MCF 10A (cell line): ENCODE measurements at regions of chr22 and their contacts with region 1.

Region 1: GRCh38 chr22:19629720-19630419 is 84.4 kb upstream of the SEPTIN5 start:
- DNase-seq: peak; percentile 83
- H3K4me3 Mint-ChIP-seq: no peak overlapping the region
- H3K27ac Mint-ChIP-seq: no peak overlapping the region
- H3K4me1 Mint-ChIP-seq: peaks cover 6% of the 10 kb centered on the region
- H3K27me3 Mint-ChIP-seq: peaks cover 11% of the 10 kb centered on the region
- CTCF ChIP-seq: peak; percentile 88

Region 2: DNA sequence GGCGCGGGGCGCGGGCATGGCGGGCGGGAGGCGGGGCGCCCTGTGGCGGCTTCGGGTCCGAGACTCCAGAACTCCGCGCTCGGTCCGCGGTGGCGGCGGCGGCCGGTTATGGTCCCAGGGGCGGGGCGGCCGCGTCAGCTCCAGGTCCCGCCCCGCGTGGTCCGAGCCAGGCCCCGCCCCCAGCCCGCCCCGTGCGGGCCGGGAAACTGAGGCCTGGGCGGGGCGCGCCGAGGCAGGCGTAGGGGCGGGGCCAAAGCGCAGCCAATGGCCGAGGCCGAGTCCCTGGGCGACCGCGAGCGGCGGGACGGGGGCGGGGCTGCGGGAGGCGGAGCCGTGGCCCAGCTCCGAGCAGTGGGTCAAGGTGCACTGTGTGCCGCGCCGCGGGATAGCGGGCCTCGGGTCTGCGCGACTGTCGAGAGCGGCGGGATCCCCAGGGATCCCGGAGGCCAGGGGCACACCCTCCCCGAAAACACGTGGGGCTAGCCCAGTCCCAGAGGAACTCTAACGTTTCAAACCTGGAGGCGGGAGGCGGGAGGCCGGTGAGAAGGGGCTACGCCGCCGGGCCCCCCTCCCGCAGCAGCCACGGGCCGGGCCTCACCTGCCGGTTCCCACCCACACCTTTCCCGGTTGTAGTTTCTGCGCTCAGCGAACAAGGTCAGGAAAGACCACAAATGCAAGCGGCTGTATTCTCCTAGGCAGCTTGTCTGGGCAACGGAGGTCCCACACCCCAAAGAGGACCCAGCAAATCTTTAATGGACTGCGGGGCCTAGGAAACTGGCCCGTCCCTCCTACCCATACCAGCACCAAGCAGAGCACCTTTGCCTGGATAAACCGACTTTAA is 451.0 kb before region 1 on chr22 and contains the start of gene SLC25A1:
- CTCF ChIA-PET with region 1: interaction called, 6 read pairs
- POLR2A ChIA-PET with region 1: no interaction called
- intact Hi-C with region 1: loop called (anchors 2 kb)
- DNase-seq: peak; percentile 90
- H3K4me3 Mint-ChIP-seq: peak within 1 kb of the TSS; percentile 75
- H3K27ac Mint-ChIP-seq: peak within 1 kb of the TSS; percentile 31
- H3K4me1 Mint-ChIP-seq: peaks cover 18% of the 10 kb centered on the region
- H3K27me3 Mint-ChIP-seq: no peaks in the 10 kb centered on the region
- CTCF ChIP-seq: no peak
- total RNA-seq, gene SLC25A1: 41.0 and 53.9 TPM in 2 replicates

Region 3: GRCh38 chr22:19479357-19480172 is 150.3 kb before region 1 on chr22 and contains the start of gene CDC45:
- CTCF ChIA-PET with region 1: interaction called, 12 read pairs
- POLR2A ChIA-PET with region 1: interaction called, 9 read pairs
- intact Hi-C with region 1: no loop called
- DNase-seq: peak; percentile 98
- H3K4me3 Mint-ChIP-seq: peak within 1 kb of the TSS; percentile 96
- H3K27ac Mint-ChIP-seq: peak within 1 kb of the TSS; percentile 100
- H3K4me1 Mint-ChIP-seq: peaks cover 38% of the 10 kb centered on the region
- H3K27me3 Mint-ChIP-seq: no peaks in the 10 kb centered on the region
- CTCF ChIP-seq: no peak
- total RNA-seq, gene CDC45: 7.5 and 18.6 TPM in 2 replicates

Region 4: DNA sequence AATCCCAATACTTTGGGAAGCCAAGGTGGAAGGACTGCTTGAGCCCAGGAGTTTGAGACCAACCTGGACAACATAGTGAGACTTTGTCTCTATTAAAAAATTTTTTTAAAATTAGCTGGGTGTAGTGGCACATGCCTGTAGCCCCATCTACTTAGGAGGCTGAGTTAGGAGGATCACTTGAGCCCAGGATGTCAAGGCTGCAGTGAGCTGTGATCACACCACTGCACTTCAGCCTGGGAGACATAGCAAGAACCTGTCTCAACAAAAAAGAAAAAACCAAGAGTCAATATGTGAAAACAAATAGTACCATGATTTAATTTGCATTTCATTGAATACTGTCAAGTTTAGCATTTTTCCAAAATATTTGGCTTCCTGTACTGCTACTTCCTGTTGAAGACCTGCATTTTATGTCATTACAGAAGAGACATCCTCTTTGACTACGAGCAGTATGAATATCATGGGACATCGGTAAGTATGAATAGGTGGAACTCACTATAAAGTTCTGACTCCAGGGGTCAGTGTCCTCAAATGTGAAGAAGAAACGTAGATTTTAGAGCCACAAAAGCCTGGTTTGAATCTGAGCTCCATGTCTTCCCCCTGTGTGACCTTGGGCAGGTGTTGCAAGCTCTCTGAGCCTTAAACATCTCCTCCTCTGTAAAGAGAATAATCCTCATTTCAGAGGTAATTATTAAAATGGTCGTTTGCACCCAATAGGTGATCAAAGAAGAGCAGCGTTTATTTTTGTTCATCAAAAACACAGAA is 134.1 kb before region 1 on chr22:
- CTCF ChIA-PET with region 1: interaction called, 30 read pairs
- POLR2A ChIA-PET with region 1: interaction called, 3 read pairs
- intact Hi-C with region 1: loop called (anchors 1 kb)
- DNase-seq: peak; percentile 32
- H3K4me3 Mint-ChIP-seq: no peak overlapping the region
- H3K27ac Mint-ChIP-seq: no peak overlapping the region
- H3K4me1 Mint-ChIP-seq: peaks cover 6% of the 10 kb centered on the region
- H3K27me3 Mint-ChIP-seq: no peaks in the 10 kb centered on the region
- CTCF ChIP-seq: peak; percentile 15

Region 5: DNA sequence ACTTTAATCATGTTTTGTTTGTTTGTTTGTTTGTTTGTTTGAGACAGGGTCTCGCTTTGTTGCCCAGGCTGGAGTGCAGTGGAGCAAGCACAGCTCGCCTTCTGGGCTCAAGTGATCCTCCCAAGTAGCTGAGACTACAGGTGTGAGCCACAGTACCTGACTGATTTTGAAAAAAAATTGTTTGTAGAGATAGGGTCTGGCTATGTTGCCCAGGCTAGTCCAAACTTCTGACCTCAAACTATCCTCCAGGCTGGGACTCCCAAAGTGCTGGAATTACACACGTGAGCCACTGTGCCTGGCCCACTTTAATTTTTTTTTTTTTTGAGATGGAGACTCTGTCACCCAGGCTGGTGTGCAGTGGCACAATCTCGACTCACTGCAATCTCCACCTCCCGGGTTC is 30.9 kb before region 1 on chr22:
- CTCF ChIA-PET with region 1: no interaction called
- POLR2A ChIA-PET with region 1: no interaction called
- intact Hi-C with region 1: no loop called
- DNase-seq: no peak
- H3K4me3 Mint-ChIP-seq: no peak overlapping the region
- H3K27ac Mint-ChIP-seq: peak overlapping the region; percentile 54
- H3K4me1 Mint-ChIP-seq: peaks cover 16% of the 10 kb centered on the region
- H3K27me3 Mint-ChIP-seq: no peaks in the 10 kb centered on the region
- CTCF ChIP-seq: no peak

Region 6: DNA sequence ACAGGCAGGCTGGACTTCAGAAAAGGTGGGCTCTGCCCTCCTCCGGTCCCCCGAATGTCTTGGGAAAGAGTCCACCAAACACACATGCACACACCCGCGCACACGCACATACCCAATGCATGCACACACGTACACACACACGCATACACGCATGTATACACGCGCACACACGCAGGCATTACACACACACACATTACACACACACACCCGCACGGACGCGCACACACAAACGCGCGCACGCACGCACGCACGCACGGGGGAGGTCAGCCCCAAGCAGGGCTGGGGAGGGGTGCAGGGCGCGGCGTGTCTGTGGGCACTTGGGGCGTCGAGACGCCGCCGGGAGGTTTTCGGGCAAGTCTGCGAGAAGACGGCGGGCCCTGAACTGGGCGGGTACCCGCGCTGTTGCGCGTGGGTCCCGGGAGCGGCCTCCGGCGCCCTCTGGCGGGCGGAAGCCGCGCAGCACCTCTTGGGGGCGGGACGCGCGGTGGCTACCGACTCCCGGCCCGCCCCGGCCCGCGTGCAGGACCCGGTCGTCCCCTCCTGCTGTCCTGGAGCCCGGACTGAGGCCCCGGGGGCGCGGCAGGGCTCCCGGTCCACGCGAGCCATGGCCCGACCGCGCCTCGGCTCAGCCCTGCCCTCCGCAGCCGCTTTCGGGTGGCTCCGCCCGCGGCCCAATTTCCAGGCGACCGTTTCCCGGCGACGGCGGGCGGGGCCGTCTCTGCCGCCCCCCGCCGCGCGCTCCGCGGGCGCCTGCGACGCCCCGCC is 88.0 kb after region 1 on chr22:
- CTCF ChIA-PET with region 1: no interaction called
- POLR2A ChIA-PET with region 1: no interaction called
- intact Hi-C with region 1: loop called (anchors 1 kb)
- DNase-seq: peak; percentile 64
- H3K4me3 Mint-ChIP-seq: peak overlapping the region; percentile 68
- H3K27ac Mint-ChIP-seq: no peak overlapping the region
- H3K4me1 Mint-ChIP-seq: peaks cover 3% of the 10 kb centered on the region
- H3K27me3 Mint-ChIP-seq: no peaks in the 10 kb centered on the region
- CTCF ChIP-seq: peak; percentile 96